Activated CD4-positive, alpha-beta memory T cell treated with anti-CD3 and anti-CD28 coated beads for 36 hours (primary cell): ENCODE measurements at regions of chr11 and their contacts with region 1.

Region 1: DNA sequence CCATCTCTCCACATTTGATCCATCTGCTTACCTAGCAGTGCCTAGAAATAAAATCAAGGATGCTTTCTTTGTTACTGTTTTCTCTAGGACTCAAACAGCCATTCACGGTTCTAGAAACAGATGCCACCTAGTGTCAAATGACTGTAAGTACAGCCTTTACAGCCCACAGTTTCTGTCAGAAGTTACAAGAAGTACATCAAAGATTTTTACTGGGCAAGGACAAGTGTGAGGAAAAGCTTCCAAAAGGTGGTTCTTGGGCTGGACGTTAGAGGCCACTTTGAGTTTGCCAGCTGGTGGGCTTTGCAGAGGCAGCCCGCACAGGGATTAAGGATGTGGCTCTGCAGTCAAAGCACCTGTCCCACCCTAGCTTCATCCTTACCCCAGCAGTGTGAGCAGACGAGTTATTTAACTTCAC is 6.9 kb downstream of the KMT5B start:
- DNase-seq: no peak
- H3K4me3 Mint-ChIP-seq: no peak overlapping the region
- H3K27ac Mint-ChIP-seq: no peak overlapping the region
- H3K4me1 Mint-ChIP-seq: peaks cover 65% of the 10 kb centered on the region
- H3K27me3 Mint-ChIP-seq: no peaks in the 10 kb centered on the region

Region 2: GRCh38 chr11:68030318-68031138 is 175.7 kb before region 1 on chr11 and contains the start of gene NDUFS8:
- CTCF ChIA-PET with region 1: no interaction called
- POLR2A ChIA-PET with region 1: no interaction called
- intact Hi-C with region 1: loop called (anchors 2 kb)
- DNase-seq: peak; percentile 98
- H3K4me3 Mint-ChIP-seq: peak within 1 kb of the TSS; percentile 99
- H3K27ac Mint-ChIP-seq: peak within 1 kb of the TSS; percentile 88
- H3K4me1 Mint-ChIP-seq: peaks cover 27% of the 10 kb centered on the region
- H3K27me3 Mint-ChIP-seq: no peaks in the 10 kb centered on the region
- total RNA-seq, gene NDUFS8: 134 to 140 TPM

Region 3: DNA sequence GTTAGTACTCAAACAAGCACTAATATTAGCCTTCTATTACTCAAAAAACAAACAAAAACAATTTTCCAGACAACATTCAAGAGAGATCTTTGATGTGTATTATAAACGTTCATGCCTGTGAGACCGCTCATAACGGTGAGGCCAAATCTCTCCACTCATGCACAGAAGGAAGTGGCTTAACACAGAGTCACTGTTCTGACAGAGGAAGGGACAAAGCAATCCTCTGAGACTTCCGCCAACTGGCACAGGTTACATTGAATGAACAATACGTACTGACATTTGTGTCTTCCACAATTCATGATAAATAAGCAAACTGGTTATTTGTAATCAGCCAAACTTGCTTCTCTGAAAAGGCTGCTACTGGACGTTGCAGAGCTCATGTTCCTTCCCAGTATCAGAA is 115.5 kb before region 1 on chr11:
- CTCF ChIA-PET with region 1: no interaction called
- POLR2A ChIA-PET with region 1: no interaction called
- intact Hi-C with region 1: no loop called
- DNase-seq: no peak
- H3K4me3 Mint-ChIP-seq: no peak overlapping the region
- H3K27ac Mint-ChIP-seq: no peak overlapping the region
- H3K4me1 Mint-ChIP-seq: no peaks in the 10 kb centered on the region
- H3K27me3 Mint-ChIP-seq: no peaks in the 10 kb centered on the region

Region 4: DNA sequence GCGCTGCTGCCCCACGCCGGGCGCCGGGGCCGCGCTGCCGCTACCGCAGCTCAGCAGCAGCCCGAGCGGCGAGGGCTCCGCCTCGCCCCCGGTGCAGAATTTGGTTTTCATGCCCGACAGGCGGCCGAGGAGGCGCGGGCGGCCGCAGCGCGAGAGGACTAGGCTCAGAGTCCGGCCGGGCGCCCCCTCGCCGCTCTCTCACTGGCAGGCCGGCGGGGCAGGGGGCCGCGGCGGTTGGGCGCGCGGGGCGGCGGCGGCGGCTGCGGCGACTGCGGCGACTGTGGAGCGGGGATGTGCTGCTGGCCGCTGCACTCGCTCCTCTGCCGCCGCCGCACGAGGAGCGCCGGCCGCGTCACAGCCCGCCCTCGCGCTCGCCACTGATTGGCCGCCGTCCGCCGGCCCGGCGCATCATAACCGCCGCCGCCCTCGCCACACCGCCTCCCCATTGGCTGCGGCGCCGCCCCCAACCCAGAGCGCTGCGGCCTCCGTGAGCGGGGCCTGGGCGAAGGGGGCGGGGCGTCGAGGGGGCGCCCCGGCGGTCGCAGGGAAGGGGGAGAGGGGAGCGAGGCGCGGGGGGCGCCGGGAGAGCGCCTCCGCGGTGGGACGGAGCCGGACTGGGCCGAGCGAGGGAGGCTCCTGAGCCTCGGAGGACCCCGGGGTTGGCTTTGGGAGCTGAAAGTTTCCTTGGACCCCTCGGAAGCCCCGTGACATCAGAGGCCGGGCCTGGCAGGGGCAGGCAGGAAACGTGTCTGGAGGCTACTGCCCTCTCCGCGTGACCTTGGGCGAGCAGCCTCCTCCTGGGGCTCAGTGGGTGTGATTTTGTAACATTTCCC is 84.9 kb before region 1 on chr11 and contains the start of gene CHKA:
- CTCF ChIA-PET with region 1: no interaction called
- POLR2A ChIA-PET with region 1: no interaction called
- intact Hi-C with region 1: loop called (anchors 5 kb)
- DNase-seq: peak; percentile 90
- H3K4me3 Mint-ChIP-seq: peak within 1 kb of the TSS; percentile 72
- H3K27ac Mint-ChIP-seq: peak within 1 kb of the TSS; percentile 28
- H3K4me1 Mint-ChIP-seq: peaks cover 6% of the 10 kb centered on the region
- H3K27me3 Mint-ChIP-seq: no peaks in the 10 kb centered on the region
- total RNA-seq, gene CHKA: 6.1 to 6.6 TPM

Region 5: DNA sequence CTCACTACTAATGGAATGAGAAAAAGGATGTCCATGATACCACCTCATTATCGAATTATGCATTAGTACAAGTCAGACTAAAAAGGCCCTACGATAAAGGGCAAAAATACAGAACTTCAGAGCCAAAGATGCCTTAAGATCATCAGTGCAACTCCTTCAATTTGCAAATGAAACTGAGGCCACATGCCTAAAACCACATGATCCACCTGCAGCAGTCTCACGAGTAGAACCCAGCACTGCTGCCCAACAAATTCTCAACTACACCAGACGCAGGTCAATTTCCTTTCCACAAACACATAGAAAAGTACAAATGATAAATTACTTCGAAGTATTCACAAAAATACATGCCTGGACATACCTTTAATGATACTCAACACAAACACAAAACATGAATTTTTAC is 13.2 kb before region 1 on chr11:
- CTCF ChIA-PET with region 1: interaction called, 27 read pairs
- POLR2A ChIA-PET with region 1: no interaction called
- intact Hi-C with region 1: no loop called
- DNase-seq: no peak
- H3K4me3 Mint-ChIP-seq: no peak overlapping the region
- H3K27ac Mint-ChIP-seq: no peak overlapping the region
- H3K4me1 Mint-ChIP-seq: peaks cover 45% of the 10 kb centered on the region
- H3K27me3 Mint-ChIP-seq: no peaks in the 10 kb centered on the region